Right cardiac atrium (tissue), 5 donors: ENCODE measurements at regions of chr2 and their contacts with region 1.

Region 1: GRCh38 chr2:55885129-55885943 is 38.2 kb downstream of the EFEMP1 start:
- DNase-seq: peak in 2 of 3 donors; percentile 17 to 55
- ATAC-seq: peak; percentile 79 to 89
- H3K4me3 ChIP-seq: no peak overlapping the region
- H3K27ac ChIP-seq: peak overlapping the region; percentile 95
- H3K4me1 ChIP-seq: peaks cover 16% of the 10 kb centered on the region
- H3K27me3 ChIP-seq: no peaks in the 10 kb centered on the region

Region 2: GRCh38 chr2:55649211-55649610 is 236.1 kb before region 1 on chr2:
- intact Hi-C with region 1: no loop called
- DNase-seq: no peak
- ATAC-seq: no peak
- H3K4me3 ChIP-seq: no peak overlapping the region
- H3K27ac ChIP-seq: no peak overlapping the region
- H3K4me1 ChIP-seq: no peaks in the 10 kb centered on the region
- H3K27me3 ChIP-seq: no peaks in the 10 kb centered on the region

Region 3: DNA sequence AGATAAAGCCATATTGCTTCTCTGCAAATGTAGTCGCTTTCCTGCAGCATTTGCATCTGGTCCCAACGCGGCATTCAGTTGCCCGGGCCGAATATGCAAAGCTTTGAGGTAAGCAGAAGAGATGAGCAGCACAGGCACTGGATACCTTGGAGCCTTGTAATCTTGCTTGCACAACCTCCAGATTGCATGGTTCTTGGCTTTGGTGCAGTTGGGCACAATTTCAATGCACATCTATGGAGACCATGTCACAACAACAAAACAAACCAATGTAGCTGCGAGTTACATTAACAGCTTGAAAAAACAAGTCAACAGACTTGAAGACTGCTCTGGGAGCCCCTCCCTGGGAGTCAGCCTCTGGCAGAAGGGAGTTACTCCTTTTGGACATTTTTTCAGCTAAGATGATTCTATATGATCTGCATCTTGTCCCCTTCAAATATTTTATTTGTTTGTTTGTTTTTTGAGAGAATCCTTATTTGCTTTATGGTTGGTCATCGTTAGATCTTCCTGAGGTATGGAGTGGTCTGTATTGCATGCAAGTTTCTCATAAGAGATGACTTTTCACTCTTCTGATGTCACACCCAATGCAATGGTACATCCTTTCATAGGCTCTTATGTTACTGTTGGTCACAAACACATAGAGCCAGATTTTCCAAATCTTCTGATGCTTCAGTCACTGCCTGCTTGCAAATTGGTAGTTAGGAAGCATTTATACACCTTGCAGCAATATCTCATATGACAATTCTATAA is 75.3 kb before region 1 on chr2:
- intact Hi-C with region 1: loop called in 1 of 4 experiments (anchors 10 kb)
- DNase-seq: peak in 2 of 3 donors; percentile 34 to 72
- ATAC-seq: peak; percentile 82 to 87
- H3K4me3 ChIP-seq: no peak overlapping the region
- H3K27ac ChIP-seq: peak overlapping the region; percentile 57
- H3K4me1 ChIP-seq: peaks cover 5% of the 10 kb centered on the region
- H3K27me3 ChIP-seq: no peaks in the 10 kb centered on the region

Region 4: DNA sequence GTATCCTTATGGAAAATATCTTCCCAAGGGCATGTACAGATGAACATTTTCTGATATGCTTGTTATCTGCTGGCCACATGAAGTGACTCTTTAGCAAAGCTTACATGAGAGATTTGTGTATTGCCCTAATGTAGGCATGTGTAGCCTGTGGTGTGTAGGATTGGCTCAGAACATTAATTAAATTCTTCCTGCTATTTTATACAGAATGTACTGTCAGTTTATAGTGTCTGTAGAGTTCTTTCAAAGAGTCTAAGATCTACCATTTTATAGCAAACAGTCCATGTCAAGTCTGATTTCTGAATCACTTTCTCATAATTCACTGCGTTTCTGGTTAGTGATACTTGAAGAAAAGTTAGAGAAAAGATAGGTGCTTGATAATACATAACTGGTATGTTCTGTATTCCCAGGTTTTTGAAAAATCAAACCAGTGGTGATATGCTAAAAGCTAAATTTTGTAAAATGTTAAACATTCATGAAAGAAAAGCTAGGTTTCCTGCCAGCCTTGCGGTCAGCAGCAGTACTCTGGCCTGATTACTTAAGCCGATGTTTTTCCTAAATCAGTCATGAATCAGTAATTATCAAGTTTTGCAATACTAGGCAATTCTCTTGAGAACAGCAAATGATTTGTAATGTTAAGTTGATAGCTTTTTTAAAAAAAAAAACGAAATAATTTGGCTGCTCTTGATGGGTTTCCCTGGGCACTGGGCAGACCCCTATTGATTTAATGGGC is 69.1 kb after region 1 on chr2:
- intact Hi-C with region 1: loop called in 1 of 4 experiments (anchors 10 kb)
- DNase-seq: peak in 1 of 3 donors; percentile 58
- ATAC-seq: peak; percentile 47 to 61
- H3K4me3 ChIP-seq: no peak overlapping the region
- H3K27ac ChIP-seq: no peak overlapping the region
- H3K4me1 ChIP-seq: peaks cover 1% of the 10 kb centered on the region
- H3K27me3 ChIP-seq: no peaks in the 10 kb centered on the region